Endothelial cell of umbilical vein (primary cell): ENCODE measurements at regions of chr7 and their contacts with region 1.

Region 1: DNA sequence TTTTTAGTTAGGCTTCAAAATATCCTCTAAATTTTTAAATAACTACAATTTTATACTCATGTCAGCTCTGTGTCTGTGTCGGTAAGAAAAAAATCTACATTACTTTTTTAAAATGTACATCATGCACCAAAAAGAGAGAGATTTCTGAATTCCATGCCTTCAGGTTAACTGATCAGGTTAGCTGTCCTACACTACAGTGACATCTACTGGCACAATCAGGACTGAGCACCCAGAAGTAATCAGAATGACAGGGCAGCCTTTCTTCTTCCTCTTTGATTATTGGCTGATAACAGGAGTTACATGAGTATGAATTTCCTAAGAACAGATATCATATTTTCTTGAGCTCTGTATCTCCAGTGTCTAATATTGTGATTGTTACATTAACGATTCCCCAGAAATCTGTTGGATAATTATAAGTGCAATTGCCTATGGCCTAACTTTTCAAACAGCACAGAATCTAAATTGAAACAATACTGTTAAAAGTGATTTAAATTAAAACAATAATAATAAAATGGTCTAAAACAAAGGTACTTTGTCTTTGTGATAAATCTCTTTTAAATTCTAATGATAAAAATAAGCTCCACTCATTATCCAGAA is 41.8 kb upstream of the HYCC1 start:
- DNase-seq: peak; percentile 76
- H3K4me3 ChIP-seq: no peak overlapping the region
- H3K27ac ChIP-seq: no peak overlapping the region
- H3K4me1 ChIP-seq: no peaks in the 10 kb centered on the region
- H3K27me3 ChIP-seq: no peaks in the 10 kb centered on the region
- CTCF ChIP-seq: peak; percentile 73 to 76
- POLR2A ChIP-seq: no peak

Region 2: GRCh38 chr7:22732556-22733126 is 323.0 kb before region 1 on chr7:
- CTCF ChIA-PET with region 1: interaction called, 36 read pairs
- POLR2A ChIA-PET with region 1: no interaction called
- dilution Hi-C with region 1: no loop called
- intact Hi-C with region 1: loop called (anchors 1 kb)
- DNase-seq: peak; percentile 45
- H3K4me3 ChIP-seq: no peak overlapping the region
- H3K27ac ChIP-seq: no peak overlapping the region
- H3K4me1 ChIP-seq: peaks cover 25% of the 10 kb centered on the region
- H3K27me3 ChIP-seq: no peaks in the 10 kb centered on the region
- CTCF ChIP-seq: peak; percentile 24 to 42
- POLR2A ChIP-seq: peak; percentile 38

Region 3: GRCh38 chr7:22822486-22823141 is 233.1 kb before region 1 on chr7 and contains the start of gene TOMM7:
- CTCF ChIA-PET with region 1: interaction called, 16 read pairs
- POLR2A ChIA-PET with region 1: no interaction called
- dilution Hi-C with region 1: no loop called
- intact Hi-C with region 1: loop called (anchors 1 kb)
- DNase-seq: peak; percentile 99
- H3K4me3 ChIP-seq: peak within 1 kb of the TSS; percentile 50 to 93 (median 75)
- H3K27ac ChIP-seq: peak within 1 kb of the TSS; percentile 60
- H3K4me1 ChIP-seq: peaks cover 5% of the 10 kb centered on the region
- H3K27me3 ChIP-seq: peaks cover 2 to 11% of the 10 kb centered on the region in 2 experiments
- CTCF ChIP-seq: no peak
- POLR2A ChIP-seq: peak; percentile 95
- total RNA-seq, gene TOMM7: 185 and 200 TPM in 2 replicates

Region 4: DNA sequence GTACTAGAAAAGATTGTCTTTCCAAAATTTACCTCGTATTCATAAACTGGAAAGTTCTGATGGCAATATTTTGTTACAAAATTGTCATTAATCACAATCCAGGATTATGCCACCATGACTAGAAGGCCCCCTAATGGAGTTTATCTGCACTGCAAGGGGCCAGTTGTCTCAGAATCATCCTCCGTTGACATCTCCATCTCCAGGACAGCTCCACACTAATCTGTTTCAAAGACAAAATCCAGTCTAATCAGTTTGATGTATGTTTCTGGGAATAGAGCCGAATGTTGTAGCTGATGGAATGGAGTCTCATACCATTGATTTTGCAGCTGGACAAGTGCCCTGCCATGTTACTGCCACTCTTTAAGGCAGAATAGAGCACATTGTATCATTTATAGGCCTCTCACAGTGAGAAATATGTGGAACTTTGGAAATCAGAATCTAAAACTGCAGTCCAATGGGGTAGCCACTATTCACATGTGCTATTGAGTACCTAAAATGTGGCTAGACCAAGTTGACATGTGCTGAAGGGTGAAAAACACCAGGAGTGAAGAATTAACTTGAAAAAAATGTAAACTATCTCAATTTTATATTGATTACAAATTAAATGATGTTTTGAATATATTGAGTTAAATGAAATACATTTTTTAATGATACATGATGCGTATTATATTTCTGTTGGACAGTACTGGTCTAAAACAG is 194.7 kb before region 1 on chr7:
- CTCF ChIA-PET with region 1: interaction called, 19 read pairs
- POLR2A ChIA-PET with region 1: no interaction called
- dilution Hi-C with region 1: no loop called
- intact Hi-C with region 1: no loop called
- DNase-seq: peak; percentile 21
- H3K4me3 ChIP-seq: no peak overlapping the region
- H3K27ac ChIP-seq: no peak overlapping the region
- H3K4me1 ChIP-seq: peaks cover 27% of the 10 kb centered on the region
- H3K27me3 ChIP-seq: no peaks in the 10 kb centered on the region
- CTCF ChIP-seq: peak; percentile 46 to 65
- POLR2A ChIP-seq: no peak

Region 5: DNA sequence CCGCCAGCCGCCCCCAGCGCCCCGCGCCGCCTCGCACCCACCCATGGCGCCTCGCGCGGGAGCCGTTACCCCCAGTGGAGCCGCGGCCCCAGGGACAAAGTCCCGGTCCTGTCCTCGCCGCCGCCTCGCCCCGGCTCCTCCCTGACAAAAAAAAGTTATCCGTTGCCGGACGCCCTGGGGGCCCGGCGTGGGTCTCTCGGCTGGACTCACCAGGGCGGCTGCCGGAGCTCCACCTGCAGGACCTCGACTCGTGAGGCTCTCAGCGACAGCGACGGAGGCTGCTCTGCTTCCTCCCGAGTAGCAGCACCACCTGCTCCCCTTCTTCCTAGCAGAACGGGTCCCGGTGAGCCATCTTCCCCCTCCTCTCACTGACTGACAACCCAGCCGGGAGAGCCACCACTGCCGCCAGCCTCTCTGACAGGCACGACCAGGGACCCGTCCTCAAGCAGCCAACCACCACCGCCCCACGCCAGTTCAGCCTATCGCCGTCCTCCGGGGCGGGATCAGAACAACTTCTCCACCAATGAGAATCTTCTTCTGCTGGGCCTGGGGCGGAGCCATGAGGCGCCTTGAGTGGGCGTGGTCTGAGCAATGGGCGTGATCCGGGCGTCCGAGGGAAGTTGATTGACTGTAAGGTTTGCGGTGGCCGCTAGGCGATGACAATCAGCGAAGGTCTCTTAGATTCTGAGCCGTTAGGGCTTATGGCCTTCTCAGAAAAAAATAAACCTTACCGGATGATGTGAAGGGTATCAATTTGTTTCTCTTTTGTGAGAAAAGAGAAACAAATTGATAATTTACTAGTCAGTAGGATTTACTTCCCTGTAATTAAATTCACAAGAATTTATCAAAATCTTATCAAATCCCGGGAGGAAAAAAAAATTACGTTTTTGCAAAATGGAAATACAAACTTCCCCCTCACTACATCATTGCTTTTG is 41.7 kb before region 1 on chr7 and contains the start of gene HYCC1:
- CTCF ChIA-PET with region 1: interaction called, 18 read pairs
- POLR2A ChIA-PET with region 1: no interaction called
- dilution Hi-C with region 1: no loop called
- intact Hi-C with region 1: loop called (anchors 2 kb)
- DNase-seq: peak; percentile 99
- H3K4me3 ChIP-seq: peak within 1 kb of the TSS; percentile 66 to 94 (median 71)
- H3K27ac ChIP-seq: peak within 1 kb of the TSS; percentile 20
- H3K4me1 ChIP-seq: peaks cover 47% of the 10 kb centered on the region
- H3K27me3 ChIP-seq: no peaks in the 10 kb centered on the region
- CTCF ChIP-seq: peak; percentile 59 to 72
- POLR2A ChIP-seq: peak; percentile 96
- total RNA-seq, gene HYCC1: 43.2 and 51.8 TPM in 2 replicates